Caco-2 (cell line): ENCODE measurements at regions of chr3 and their contacts with region 1.

Region 1: GRCh38 chr3:44198284-44199269 is 43.1 kb upstream of the TOPAZ1 start:
- DNase-seq: peak; percentile 63 to 79
- H3K4me3 ChIP-seq: no peak overlapping the region
- H3K4me3 Mint-ChIP-seq: no peak overlapping the region
- H3K27ac Mint-ChIP-seq: no peak overlapping the region
- H3K4me1 ChIP-seq: peaks cover 10% of the 10 kb centered on the region; the same call in 1 of the 2 replicates
- H3K4me1 Mint-ChIP-seq: no peaks in the 10 kb centered on the region
- H3K27me3 ChIP-seq: no peaks in the 10 kb centered on the region
- H3K27me3 Mint-ChIP-seq: no peaks in the 10 kb centered on the region
- CTCF ChIP-seq: peak; percentile 78 to 82

Region 2: DNA sequence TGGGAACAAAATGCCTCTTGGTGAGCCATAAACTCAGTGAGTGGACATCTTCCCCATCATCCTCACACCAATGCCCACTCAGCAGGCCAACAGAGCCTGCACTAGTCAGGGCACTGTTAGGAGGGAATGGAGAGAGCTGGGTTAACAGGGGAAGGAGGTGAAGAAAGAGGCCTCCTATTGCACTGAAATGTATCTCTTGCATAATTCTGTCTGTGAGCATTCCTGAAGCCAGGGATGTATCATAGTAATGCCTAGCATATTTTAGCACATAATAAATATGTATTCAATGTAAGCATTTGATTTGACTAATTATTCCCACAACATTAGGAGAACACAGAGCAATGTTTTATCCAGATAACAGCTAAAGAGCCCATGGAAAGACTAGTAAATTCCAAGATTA is 658.0 kb before region 1 on chr3:
- CTCF ChIA-PET with region 1: no interaction called
- POLR2A ChIA-PET with region 1: no interaction called
- intact Hi-C with region 1: loop called (anchors 1 kb)
- DNase-seq: no peak
- H3K4me3 ChIP-seq: no peak overlapping the region
- H3K4me3 Mint-ChIP-seq: no peak overlapping the region
- H3K27ac Mint-ChIP-seq: no peak overlapping the region
- H3K4me1 ChIP-seq: no peaks in the 10 kb centered on the region
- H3K4me1 Mint-ChIP-seq: no peaks in the 10 kb centered on the region
- H3K27me3 ChIP-seq: no peaks in the 10 kb centered on the region
- H3K27me3 Mint-ChIP-seq: no peaks in the 10 kb centered on the region
- CTCF ChIP-seq: no peak

Region 3: GRCh38 chr3:43855674-43856299 is 342.8 kb before region 1 on chr3:
- CTCF ChIA-PET with region 1: interaction called, 13 read pairs
- POLR2A ChIA-PET with region 1: no interaction called
- intact Hi-C with region 1: loop called (anchors 1 kb)
- DNase-seq: peak; percentile 62 to 64
- H3K4me3 ChIP-seq: no peak overlapping the region
- H3K4me3 Mint-ChIP-seq: no peak overlapping the region
- H3K27ac Mint-ChIP-seq: no peak overlapping the region
- H3K4me1 ChIP-seq: no peaks in the 10 kb centered on the region
- H3K4me1 Mint-ChIP-seq: peaks cover 7% of the 10 kb centered on the region
- H3K27me3 ChIP-seq: no peaks in the 10 kb centered on the region
- H3K27me3 Mint-ChIP-seq: peaks cover 16% of the 10 kb centered on the region
- CTCF ChIP-seq: peak; percentile 54 to 78

Region 4: GRCh38 chr3:43998836-43999727 is 199.5 kb before region 1 on chr3:
- CTCF ChIA-PET with region 1: no interaction called
- POLR2A ChIA-PET with region 1: no interaction called
- intact Hi-C with region 1: loop called (anchors 5 kb)
- DNase-seq: peak; percentile 69 to 78
- H3K4me3 ChIP-seq: peak overlapping the region; percentile 64
- H3K4me3 Mint-ChIP-seq: peak overlapping the region; percentile 70
- H3K27ac Mint-ChIP-seq: no peak overlapping the region
- H3K4me1 ChIP-seq: no peaks in the 10 kb centered on the region
- H3K4me1 Mint-ChIP-seq: no peaks in the 10 kb centered on the region
- H3K27me3 ChIP-seq: peaks cover 2% of the 10 kb centered on the region; the same call in 1 of the 2 replicates
- H3K27me3 Mint-ChIP-seq: peaks cover 6% of the 10 kb centered on the region
- CTCF ChIP-seq: no peak

Region 5: DNA sequence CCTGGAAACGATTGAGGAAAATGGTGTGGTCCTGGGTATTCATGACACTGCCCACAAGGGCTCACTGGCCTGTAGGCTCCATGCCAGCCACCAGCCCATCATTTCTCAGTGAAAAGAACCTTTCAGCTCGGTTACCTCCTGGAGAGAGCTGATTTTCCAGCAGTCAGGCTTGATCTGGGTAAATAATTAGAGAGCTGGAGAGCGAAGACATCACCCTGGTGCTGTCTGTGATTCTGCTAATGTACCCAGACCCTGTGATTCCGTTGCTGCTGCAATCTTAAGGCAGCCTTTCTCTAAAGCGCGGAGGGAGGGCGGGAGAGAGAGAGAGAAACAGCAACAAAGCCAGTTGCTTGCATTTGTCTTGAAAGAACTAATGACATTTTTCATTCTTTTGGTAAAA is 178.8 kb before region 1 on chr3:
- CTCF ChIA-PET with region 1: no interaction called
- POLR2A ChIA-PET with region 1: no interaction called
- intact Hi-C with region 1: no loop called
- DNase-seq: no peak
- H3K4me3 ChIP-seq: no peak overlapping the region
- H3K4me3 Mint-ChIP-seq: no peak overlapping the region
- H3K27ac Mint-ChIP-seq: no peak overlapping the region
- H3K4me1 ChIP-seq: no peaks in the 10 kb centered on the region
- H3K4me1 Mint-ChIP-seq: no peaks in the 10 kb centered on the region
- H3K27me3 ChIP-seq: no peaks in the 10 kb centered on the region
- H3K27me3 Mint-ChIP-seq: no peaks in the 10 kb centered on the region
- CTCF ChIP-seq: no peak

Region 6: GRCh38 chr3:44146073-44146472 is 52.5 kb before region 1 on chr3:
- CTCF ChIA-PET with region 1: no interaction called
- POLR2A ChIA-PET with region 1: no interaction called
- intact Hi-C with region 1: no loop called
- DNase-seq: no peak
- H3K4me3 ChIP-seq: no peak overlapping the region
- H3K4me3 Mint-ChIP-seq: no peak overlapping the region
- H3K27ac Mint-ChIP-seq: no peak overlapping the region
- H3K4me1 ChIP-seq: no peaks in the 10 kb centered on the region
- H3K4me1 Mint-ChIP-seq: no peaks in the 10 kb centered on the region
- H3K27me3 ChIP-seq: no peaks in the 10 kb centered on the region; the same call in 1 of the 2 replicates
- H3K27me3 Mint-ChIP-seq: peaks cover 10% of the 10 kb centered on the region
- CTCF ChIP-seq: no peak

Region 7: GRCh38 chr3:44235604-44236484 is 37.3 kb after region 1 on chr3:
- CTCF ChIA-PET with region 1: no interaction called
- POLR2A ChIA-PET with region 1: no interaction called
- intact Hi-C with region 1: loop called (anchors 1 kb)
- DNase-seq: peak; percentile 66 to 70
- H3K4me3 ChIP-seq: no peak overlapping the region
- H3K4me3 Mint-ChIP-seq: peak overlapping the region; percentile 38
- H3K27ac Mint-ChIP-seq: peak overlapping the region; percentile 29
- H3K4me1 ChIP-seq: peaks cover 26% of the 10 kb centered on the region
- H3K4me1 Mint-ChIP-seq: peaks cover 9% of the 10 kb centered on the region
- H3K27me3 ChIP-seq: no peaks in the 10 kb centered on the region
- H3K27me3 Mint-ChIP-seq: no peaks in the 10 kb centered on the region
- CTCF ChIP-seq: peak; percentile 56 to 74

Region 8: GRCh38 chr3:44476181-44476611 is 277.6 kb after region 1 on chr3:
- CTCF ChIA-PET with region 1: no interaction called
- POLR2A ChIA-PET with region 1: no interaction called
- intact Hi-C with region 1: no loop called
- DNase-seq: no peak
- H3K4me3 ChIP-seq: peak overlapping the region; percentile 67
- H3K4me3 Mint-ChIP-seq: peak overlapping the region; percentile 88
- H3K27ac Mint-ChIP-seq: no peak overlapping the region
- H3K4me1 ChIP-seq: peaks cover 12% of the 10 kb centered on the region
- H3K4me1 Mint-ChIP-seq: peaks cover 13% of the 10 kb centered on the region
- H3K27me3 ChIP-seq: no peaks in the 10 kb centered on the region
- H3K27me3 Mint-ChIP-seq: no peaks in the 10 kb centered on the region
- CTCF ChIP-seq: no peak

Region 9: GRCh38 chr3:45011756-45012508 is 813.4 kb after region 1 on chr3:
- CTCF ChIA-PET with region 1: no interaction called
- POLR2A ChIA-PET with region 1: no interaction called
- intact Hi-C with region 1: no loop called
- DNase-seq: no peak
- H3K4me3 ChIP-seq: no peak overlapping the region
- H3K4me3 Mint-ChIP-seq: no peak overlapping the region
- H3K27ac Mint-ChIP-seq: no peak overlapping the region
- H3K4me1 ChIP-seq: peaks cover 20% of the 10 kb centered on the region
- H3K4me1 Mint-ChIP-seq: peaks cover 13% of the 10 kb centered on the region
- H3K27me3 ChIP-seq: no peaks in the 10 kb centered on the region
- H3K27me3 Mint-ChIP-seq: no peaks in the 10 kb centered on the region
- CTCF ChIP-seq: no peak